ENCODE measurements at regions of chr6 and their contacts with region 1.

Region 1: DNA sequence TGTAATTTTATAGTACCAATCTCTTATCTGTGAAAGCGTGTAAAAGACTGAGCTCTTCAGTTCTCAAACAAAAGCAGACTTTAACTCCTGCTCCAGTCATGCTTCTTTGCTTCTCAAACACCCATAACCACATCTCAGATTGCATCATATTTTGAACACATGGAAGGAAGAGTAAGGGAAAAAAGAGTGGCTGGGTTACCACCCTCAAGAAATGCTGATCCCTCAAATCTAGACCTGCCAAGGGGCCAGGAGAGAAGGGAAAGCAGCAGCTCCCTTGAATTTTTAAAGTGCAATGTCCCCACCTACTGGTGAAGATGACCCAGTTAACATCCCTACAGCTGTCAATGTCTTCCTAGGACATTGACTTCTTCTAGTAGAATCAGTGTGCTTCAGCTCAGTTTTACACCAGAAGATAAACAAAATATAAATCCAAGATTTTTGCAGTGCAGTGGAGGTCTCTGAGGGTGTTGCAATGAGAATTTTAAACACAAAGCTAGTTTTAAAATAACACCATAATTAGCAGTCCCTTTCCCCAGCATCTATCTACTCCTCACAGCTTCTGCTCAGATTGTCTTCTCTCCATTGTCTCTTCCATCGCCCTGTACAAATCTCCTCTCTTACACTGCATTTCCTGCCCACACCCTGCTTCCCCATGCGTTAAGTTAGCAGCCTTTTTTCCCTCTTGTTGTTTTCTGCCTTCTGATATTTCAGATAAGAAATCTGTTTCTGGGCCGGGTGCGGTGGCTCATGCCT is 22.6 kb upstream of the HLA-DQB2 start:
- DNase-seq: peak in 3 of 10 donors; percentile 11 to 20 (median 16)

Region 2: DNA sequence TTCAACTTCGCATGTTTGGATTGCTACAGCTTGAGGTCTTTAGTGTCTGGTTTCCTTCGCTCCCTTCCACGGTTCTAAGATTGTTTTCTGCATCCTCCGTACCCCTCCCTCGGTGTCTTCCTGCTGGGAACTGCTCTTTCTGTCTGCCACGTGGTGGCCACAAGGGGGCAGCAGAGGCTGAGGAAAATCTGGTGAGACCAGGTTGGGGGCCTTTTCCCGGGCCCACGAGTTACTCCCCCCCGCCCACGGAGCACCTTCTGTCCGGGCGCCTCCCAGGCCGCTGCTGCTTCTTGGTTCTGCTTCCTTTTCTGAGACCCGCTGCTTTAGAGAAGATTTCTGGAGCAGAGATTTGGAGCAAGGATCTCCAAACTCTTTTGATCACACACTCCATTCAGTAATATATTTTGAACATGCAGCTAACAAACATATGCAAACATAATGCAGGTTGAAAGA is 541.0 kb before region 1 on chr6:
- intact Hi-C with region 1: loop called (anchors 5 kb)
- DNase-seq: peak; percentile 51 to 97 (median 84)

Region 3: DNA sequence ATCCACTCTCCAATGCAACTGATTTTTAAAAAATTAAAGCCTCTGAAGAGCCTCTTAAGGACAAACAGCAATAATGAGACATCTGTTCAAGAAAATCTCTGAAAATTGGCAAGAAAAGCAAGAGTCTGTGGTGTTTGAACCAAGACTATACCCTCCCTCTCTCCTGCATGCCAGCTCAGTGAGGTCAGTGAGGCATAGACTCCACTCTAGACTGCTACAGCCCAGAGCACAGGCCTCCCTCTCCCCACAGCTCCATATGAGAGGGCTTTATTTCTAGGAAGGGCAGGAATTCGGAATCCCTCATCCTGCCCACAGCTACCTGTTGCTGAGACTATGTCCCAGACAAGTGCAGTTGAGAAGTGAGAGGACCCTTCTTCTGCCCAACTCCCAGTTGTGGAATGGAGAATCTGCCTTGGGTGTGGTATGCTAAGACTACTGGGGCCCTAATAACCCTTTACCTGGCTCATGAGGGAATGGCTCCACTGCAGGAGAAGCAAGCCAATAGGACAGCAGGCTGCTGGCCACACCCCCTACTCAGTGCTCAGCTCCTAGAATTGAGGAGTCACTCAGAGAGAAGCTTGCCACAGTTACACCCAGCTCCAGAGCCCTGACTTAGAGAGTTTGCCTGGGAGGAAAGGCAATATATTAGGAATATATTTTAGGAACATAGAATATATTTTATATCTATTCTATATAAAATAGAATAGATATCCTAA is 171.4 kb before region 1 on chr6:
- intact Hi-C with region 1: no loop called
- DNase-seq: no peak

Region 4: GRCh38 chr6:32825966-32826365 is 40.0 kb after region 1 on chr6:
- intact Hi-C with region 1: no loop called
- DNase-seq: no peak

Region 5: GRCh38 chr6:33323623-33323948 is 537.6 kb after region 1 on chr6:
- intact Hi-C with region 1: no loop called
- DNase-seq: no peak

Measured in posterior cingulate gyrus (tissue), 11 donors.